Cardiac septum (tissue), 1 donor: ENCODE measurements at regions of chr3 and their contacts with region 1.

Region 1: DNA sequence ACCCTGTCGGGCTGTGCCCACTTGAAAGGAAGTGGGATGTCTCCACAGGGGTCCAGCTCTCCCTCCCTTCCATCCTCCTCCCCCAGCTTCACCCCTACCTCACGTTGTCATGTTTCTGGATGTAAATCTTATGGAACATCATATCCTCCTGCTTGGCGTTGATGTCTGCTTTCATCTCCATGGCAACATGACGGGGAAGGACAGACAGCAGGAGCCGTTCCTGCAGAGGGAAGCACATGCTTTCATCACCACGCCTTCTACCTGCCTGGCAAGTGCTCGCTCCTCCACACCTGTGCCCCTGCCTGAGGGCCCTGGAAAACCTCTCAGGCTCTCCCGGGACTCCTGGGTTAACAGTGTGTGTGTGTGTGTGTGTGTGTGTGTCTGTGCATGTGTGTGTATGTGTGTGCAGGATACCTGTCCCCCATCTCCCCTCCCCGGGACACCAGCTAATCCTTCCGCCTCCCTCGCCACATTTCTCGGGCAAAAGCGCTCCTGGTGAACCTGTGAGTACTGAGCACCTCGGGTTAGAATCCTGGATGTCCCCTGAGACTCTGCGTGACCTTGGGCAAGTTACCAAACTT is 101.1 kb downstream of the ADCY5 start:
- DNase-seq: peak; percentile 58

Region 2: GRCh38 chr3:123375014-123375940 is 27.5 kb after region 1 on chr3:
- intact Hi-C with region 1: loop called (anchors 1 kb)
- DNase-seq: peak; percentile 66

Region 3: DNA sequence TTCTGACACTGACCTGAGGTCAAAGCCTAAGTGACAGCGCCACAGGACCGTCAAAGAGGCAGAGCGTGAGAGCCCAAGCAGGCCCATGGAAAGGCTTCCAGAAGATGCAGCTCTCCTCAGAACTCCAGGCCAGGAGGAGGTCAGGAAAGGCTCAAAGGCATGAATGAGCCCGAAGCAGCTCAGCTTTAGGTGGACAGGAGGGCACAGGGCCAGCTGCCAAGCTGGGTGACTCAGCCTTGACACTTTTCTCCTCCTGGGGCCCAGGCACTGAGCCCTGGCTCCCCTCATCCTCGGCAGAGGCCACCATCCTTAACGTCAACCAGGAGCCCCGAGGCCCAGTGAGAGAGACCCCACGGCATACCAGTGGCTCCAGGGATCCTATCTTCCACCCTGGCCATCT is 38.2 kb after region 1 on chr3:
- intact Hi-C with region 1: no loop called
- DNase-seq: no peak

Region 4: DNA sequence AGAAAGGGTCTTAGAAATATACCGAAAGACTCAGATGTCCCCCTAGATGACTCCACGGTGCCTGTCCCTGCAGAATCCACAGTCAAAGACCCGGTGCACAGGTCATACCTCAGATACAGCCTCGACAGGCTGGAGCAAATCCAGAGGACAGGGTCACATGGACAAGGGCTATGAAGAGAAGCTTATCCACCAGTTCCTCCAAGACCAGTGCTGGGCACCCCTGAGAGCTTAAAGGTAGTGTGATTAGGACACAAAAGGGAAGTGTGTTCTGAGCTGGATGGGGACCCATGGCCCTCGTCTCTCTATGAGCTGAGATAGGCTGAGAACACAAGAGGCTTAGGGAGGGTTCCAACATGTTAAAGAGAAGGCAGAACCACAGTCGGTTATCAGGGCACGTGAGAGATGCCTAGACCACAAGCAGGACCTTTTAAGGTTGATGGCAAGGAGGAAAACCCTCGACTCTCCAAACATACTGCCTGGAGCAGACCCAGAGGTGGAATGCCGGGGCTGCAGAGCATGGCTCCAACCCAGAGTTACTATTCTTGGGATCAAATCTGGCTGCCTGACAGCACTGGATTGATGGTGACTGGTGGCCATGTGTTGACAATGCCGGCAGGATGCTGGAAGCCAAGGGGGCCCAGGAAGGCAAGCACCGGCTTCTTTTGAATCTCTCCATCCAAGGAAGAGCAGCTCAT is 54.2 kb after region 1 on chr3:
- intact Hi-C with region 1: loop called (anchors 2 kb)
- DNase-seq: peak; percentile 87

Region 5: GRCh38 chr3:123421353-123422174 is 73.8 kb after region 1 on chr3:
- intact Hi-C with region 1: loop called (anchors 5 kb)
- DNase-seq: no peak